Endothelial cell of umbilical vein (primary cell): ENCODE measurements at regions of chrX and their contacts with region 1.

Region 1: DNA sequence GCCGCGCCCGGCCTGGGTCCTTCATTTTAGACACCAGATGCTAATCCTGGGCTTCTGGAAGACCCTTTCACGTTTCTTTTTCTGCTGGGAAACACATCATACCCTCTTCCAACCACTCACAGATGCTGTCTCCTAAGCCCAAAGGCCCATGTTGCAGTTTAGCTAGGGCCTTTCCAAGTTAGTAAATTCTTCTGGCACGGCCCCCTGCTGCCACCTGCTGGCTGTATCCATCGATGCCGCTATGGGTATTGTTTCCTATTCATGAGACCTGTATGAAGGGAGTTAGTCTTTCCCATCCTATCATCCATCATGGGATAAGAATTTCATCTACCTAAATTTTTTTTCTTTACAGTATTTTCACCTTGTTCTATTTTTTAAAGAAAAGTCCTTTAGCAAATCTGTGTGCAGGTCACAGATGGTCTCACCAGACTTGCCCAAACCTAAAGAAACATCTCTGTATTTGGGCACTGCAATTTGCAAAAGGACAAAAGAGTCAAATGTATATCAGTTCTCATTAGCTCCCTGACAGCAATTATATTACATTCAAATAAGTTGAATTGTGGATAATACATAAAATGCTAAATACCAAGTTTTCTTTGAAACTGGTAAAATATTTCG is 37.8 kb upstream of the SLC9A7 start:
- DNase-seq: peak; percentile 67
- H3K4me3 ChIP-seq: no peak overlapping the region
- H3K27ac ChIP-seq: no peak overlapping the region
- H3K4me1 ChIP-seq: peaks cover 15% of the 10 kb centered on the region
- H3K27me3 ChIP-seq: no peaks in the 10 kb centered on the region
- CTCF ChIP-seq: peak; percentile 56 to 65
- POLR2A ChIP-seq: no peak

Region 2: GRCh38 chrX:46573331-46573891 is 223.3 kb before region 1 on chrX and contains the start of gene CHST7:
- CTCF ChIA-PET with region 1: no interaction called
- POLR2A ChIA-PET with region 1: no interaction called
- dilution Hi-C with region 1: no loop called
- intact Hi-C with region 1: loop called (anchors 10 kb)
- DNase-seq: peak; percentile 75
- H3K4me3 ChIP-seq: peak within 1 kb of the TSS; percentile 48 to 74 (median 67)
- H3K27ac ChIP-seq: peak within 1 kb of the TSS; percentile 52
- H3K4me1 ChIP-seq: peaks cover 30% of the 10 kb centered on the region
- H3K27me3 ChIP-seq: no peaks in the 10 kb centered on the region
- CTCF ChIP-seq: peak; percentile 33 to 38
- POLR2A ChIP-seq: no peak
- total RNA-seq, gene CHST7: 9.8 and 11.2 TPM in 2 replicates

Region 3: DNA sequence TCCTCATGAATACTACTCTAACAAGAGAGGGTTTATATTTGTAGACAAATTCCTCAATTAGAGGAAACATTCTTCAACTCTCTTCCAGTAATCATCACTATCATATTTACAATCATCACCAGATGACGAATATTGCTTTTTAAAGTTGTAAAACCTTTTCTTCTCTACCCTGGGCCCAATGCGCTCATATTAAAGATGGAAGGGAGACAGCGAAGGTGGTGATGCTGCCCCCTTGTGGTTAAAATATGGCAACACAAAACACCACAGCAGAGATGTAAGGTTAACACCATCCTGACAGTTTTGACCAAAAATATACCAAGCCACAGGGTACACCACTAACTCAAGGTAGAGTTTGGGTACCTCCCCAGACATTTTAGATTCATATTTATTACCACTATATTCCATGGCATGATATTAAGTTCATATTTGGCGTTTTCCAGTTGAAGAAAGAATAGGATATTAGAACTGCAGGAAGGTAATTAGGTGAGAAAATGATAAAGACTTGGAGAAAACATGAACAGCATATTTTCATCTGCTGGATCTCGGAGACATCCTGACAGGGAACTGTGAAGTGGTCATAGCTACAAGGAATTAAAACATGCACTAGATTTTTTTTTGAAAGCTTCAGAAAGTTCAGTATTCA is 110.6 kb before region 1 on chrX:
- CTCF ChIA-PET with region 1: interaction called, 4 read pairs
- POLR2A ChIA-PET with region 1: no interaction called
- dilution Hi-C with region 1: no loop called
- intact Hi-C with region 1: loop called (anchors 10 kb)
- DNase-seq: peak; percentile 41
- H3K4me3 ChIP-seq: no peak overlapping the region
- H3K27ac ChIP-seq: no peak overlapping the region
- H3K4me1 ChIP-seq: peaks cover 3% of the 10 kb centered on the region
- H3K27me3 ChIP-seq: no peaks in the 10 kb centered on the region
- CTCF ChIP-seq: peak; percentile 52 to 56
- POLR2A ChIP-seq: no peak

Region 4: DNA sequence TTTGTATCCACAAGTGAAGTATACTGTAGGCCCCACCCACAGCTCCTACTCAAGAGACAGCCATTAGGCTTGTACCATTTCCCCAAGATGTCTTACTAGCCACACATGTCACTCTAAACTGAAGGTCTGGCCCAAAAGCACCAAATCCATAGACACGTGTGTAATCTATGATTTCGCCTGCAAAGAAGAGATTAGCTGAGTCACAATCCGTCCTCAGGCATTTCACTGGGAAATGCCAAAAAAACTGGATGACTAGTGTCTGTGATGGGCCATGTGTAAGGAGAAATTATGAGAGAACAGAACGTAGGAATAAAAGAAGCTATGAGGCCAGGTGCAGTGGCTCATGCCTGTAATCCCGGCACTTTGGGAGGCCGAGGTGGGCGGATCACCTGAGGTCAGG is 18.3 kb after region 1 on chrX:
- CTCF ChIA-PET with region 1: no interaction called
- POLR2A ChIA-PET with region 1: no interaction called
- dilution Hi-C with region 1: no loop called
- intact Hi-C with region 1: no loop called
- DNase-seq: no peak
- H3K4me3 ChIP-seq: no peak overlapping the region
- H3K27ac ChIP-seq: no peak overlapping the region
- H3K4me1 ChIP-seq: peaks cover 7% of the 10 kb centered on the region
- H3K27me3 ChIP-seq: no peaks in the 10 kb centered on the region
- CTCF ChIP-seq: no peak
- POLR2A ChIP-seq: no peak

Region 5: DNA sequence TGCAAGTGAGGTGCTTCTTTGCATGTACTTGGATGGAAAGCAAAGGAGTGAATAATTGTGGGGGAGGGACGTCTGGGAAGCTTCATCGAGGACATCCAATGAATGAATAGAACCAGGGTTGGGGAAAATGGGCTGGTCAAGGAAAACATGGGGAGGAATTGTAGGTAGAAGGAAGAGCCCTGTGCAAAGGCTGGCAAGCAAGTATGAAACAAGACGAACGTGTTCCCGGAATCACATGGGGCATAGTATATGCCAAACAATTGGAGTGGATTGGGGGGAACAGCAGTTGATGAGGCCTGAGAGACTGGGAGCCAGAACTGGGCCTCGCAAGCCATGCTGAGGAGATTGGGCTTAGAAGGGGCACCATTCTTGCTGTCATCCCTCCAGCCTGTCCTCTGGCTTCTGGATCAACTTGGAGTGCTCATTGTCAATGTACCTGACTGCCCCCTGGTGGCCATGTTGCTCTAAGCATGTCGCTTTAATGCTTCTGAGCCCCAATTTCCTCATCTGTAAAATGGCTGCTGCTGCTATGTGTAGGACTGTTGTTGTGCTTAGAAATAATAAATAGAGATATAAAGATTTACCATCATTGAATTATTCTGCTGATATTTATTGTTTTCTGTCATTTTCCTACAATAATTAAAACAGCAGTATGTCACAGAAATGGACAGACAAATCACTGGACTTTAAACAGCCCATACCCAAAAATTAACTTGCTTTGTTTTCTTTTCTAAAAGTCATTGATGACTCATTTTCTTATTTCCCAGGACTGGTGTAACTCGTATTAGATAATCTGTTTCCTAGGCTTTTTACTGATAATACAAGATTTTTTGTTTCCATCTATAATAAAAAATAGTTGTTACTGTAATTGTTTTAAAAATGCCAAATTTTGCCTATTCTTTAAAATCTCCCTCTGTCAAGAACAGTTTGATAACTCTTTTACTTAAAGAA is 181.9 kb after region 1 on chrX:
- CTCF ChIA-PET with region 1: no interaction called
- POLR2A ChIA-PET with region 1: no interaction called
- dilution Hi-C with region 1: no loop called
- intact Hi-C with region 1: loop called (anchors 2 kb)
- DNase-seq: peak; percentile 87
- H3K4me3 ChIP-seq: peak overlapping the region in 1 of 3 experiments; percentile 69
- H3K27ac ChIP-seq: peak overlapping the region; percentile 97
- H3K4me1 ChIP-seq: peaks cover 2% of the 10 kb centered on the region
- H3K27me3 ChIP-seq: no peaks in the 10 kb centered on the region
- CTCF ChIP-seq: peak; percentile 65 to 66
- POLR2A ChIP-seq: no peak